ENCODE measurements at regions of chr4 and their contacts with region 1.

Region 1: DNA sequence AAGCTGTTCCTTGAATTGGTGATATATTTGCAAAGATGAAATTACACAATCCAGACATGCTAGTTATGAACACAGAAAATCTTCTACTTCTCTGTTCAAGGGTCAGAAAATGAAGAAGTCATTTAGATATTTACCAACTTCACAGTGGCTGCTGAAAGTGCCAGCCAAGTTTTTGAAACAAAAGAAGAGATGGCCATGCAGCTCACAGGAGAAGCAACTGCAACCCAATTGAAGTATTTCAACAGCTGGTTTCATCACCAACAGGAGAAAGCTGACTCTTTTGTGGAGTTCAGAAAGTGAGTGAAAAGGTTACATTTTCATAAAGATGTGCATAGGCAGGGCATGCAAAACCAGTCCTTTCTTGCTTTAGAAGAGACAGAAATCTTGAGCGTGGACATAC is 70.1 kb upstream of the LSM6 start:
- DNase-seq: no peak
- H3K4me3 Mint-ChIP-seq: no peak overlapping the region
- H3K27ac Mint-ChIP-seq: peak overlapping the region; percentile 18
- H3K4me1 Mint-ChIP-seq: peaks cover 11% of the 10 kb centered on the region
- H3K27me3 Mint-ChIP-seq: peaks cover 19% of the 10 kb centered on the region

Region 2: DNA sequence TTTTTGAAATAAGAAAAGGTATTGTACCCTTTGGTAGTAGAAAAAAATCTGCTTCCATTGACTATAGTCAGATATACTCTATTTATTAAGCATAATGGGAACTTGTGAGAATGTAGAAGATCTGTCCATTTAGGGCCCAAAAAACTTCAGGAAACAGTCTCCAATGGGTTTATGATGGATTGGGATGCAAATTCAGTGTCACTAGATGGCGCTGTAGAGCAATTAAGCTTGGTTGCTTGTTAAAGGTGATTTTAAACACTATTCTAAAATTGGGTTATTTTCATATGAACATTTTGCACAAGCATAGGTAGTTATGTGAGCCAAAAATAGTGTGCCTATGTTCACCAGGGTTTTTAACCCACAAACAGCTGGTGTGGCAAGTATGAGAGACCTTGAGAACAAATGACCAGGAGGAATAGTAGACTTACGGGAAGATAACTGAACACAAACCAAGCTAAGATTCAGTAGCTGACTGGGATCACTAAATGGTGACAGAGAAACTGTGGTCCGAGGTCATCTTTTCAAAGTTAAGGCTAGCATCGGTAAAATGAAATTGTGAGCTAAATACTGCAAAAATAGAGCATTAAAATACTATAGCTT is 10.3 kb before region 1 on chr4:
- CTCF ChIA-PET with region 1: interaction called, 10 read pairs
- POLR2A ChIA-PET with region 1: no interaction called
- intact Hi-C with region 1: no loop called
- DNase-seq: peak; percentile 12
- H3K4me3 Mint-ChIP-seq: no peak overlapping the region
- H3K27ac Mint-ChIP-seq: no peak overlapping the region
- H3K4me1 Mint-ChIP-seq: no peaks in the 10 kb centered on the region
- H3K27me3 Mint-ChIP-seq: peaks cover 7% of the 10 kb centered on the region

Region 3: GRCh38 chr4:146124023-146124662 is 18.7 kb after region 1 on chr4:
- CTCF ChIA-PET with region 1: no interaction called
- POLR2A ChIA-PET with region 1: no interaction called
- intact Hi-C with region 1: loop called (anchors 2 kb)
- DNase-seq: peak; percentile 37
- H3K4me3 Mint-ChIP-seq: no peak overlapping the region
- H3K27ac Mint-ChIP-seq: no peak overlapping the region
- H3K4me1 Mint-ChIP-seq: peaks cover 5% of the 10 kb centered on the region
- H3K27me3 Mint-ChIP-seq: peaks cover 6% of the 10 kb centered on the region

Region 4: GRCh38 chr4:146132445-146132844 is 27.0 kb after region 1 on chr4:
- CTCF ChIA-PET with region 1: no interaction called
- POLR2A ChIA-PET with region 1: no interaction called
- intact Hi-C with region 1: loop called (anchors 1 kb)
- DNase-seq: peak; percentile 86
- H3K4me3 Mint-ChIP-seq: no peak overlapping the region
- H3K27ac Mint-ChIP-seq: peak overlapping the region; percentile 26
- H3K4me1 Mint-ChIP-seq: peaks cover 17% of the 10 kb centered on the region
- H3K27me3 Mint-ChIP-seq: peaks cover 12% of the 10 kb centered on the region

Region 5: DNA sequence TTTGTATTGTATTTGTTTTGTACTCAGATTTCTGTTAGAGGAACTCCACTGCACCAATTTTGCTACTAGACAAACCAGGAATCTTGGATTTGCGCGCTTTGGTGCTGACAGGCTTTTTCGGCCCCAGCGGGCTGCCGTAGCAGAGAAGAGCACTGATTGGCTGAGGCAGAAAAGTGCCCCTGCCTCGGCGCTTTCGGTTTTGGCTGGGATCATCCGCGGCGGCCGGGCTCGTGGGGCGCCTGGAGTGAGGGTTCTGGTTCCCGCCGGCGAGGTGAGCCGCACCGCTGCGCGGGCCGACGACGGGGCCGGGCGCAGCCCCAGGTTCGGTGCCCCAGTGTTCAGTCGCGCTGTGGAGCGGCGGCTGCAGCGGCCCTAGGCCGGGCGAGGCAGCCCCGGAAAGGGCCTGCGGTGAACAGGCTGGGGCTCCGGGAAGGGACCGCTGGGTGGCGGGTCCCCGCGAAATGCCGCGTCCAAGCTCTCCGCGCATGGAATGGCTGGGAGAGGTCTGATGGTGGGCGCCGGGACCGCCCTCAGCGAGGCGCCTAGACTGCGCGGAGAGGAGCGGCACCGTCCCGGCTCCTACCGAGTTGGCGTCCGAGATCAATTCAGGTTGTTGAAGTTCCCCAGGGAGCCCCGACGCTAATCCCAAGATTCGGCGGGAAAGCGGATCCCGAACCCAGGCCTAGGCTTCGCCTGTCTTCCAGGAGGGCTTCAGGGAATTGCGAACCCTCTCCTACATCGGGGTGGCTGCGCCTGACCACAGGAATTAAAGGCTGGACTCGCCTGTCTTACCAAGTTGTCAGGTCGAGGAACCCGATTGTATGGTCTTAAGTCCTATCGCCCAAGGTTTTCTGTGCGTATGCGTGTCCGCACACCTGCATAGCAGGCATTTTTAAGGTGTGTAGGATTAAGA is 70.3 kb after region 1 on chr4 and contains the start of gene LSM6:
- CTCF ChIA-PET with region 1: no interaction called
- POLR2A ChIA-PET with region 1: no interaction called
- intact Hi-C with region 1: loop called (anchors 5 kb)
- DNase-seq: peak; percentile 89
- H3K4me3 Mint-ChIP-seq: peak within 1 kb of the TSS; percentile 83
- H3K27ac Mint-ChIP-seq: peak within 1 kb of the TSS; percentile 87
- H3K4me1 Mint-ChIP-seq: peaks cover 42% of the 10 kb centered on the region
- H3K27me3 Mint-ChIP-seq: no peaks in the 10 kb centered on the region
- total RNA-seq, gene LSM6: 64.2 to 65.5 TPM

Region 6: GRCh38 chr4:147136310-147136709 is 1030.8 kb after region 1 on chr4:
- CTCF ChIA-PET with region 1: no interaction called
- POLR2A ChIA-PET with region 1: no interaction called
- intact Hi-C with region 1: no loop called
- DNase-seq: no peak
- H3K4me3 Mint-ChIP-seq: no peak overlapping the region
- H3K27ac Mint-ChIP-seq: no peak overlapping the region
- H3K4me1 Mint-ChIP-seq: no peaks in the 10 kb centered on the region
- H3K27me3 Mint-ChIP-seq: peaks cover 9% of the 10 kb centered on the region

Measured in activated CD4-positive, alpha-beta memory T cell treated with anti-CD3 and anti-CD28 coated beads for 36 hours (primary cell).